Activated T-helper 1 cell treated with anti-CD3 and anti-CD28 coated beads, Interleukin-12 subunit alpha, Interleukin-12 subunit beta, Interleukin-2, Interleukin-4 antibody, amounts not matched to agents 30 ng/mL and 10 ng/mL and 1 ng/mL, durations not matched to agents 14 hours and 24 hours and 36 hours (primary cell): ENCODE measurements at regions of chr6 and their contacts with region 1.

Region 1: GRCh38 chr6:154928325-154928922 is 66.7 kb upstream of the TIAM2 start:
- DNase-seq: peak; percentile 52
- H3K4me3 Mint-ChIP-seq: no peak overlapping the region
- H3K27ac Mint-ChIP-seq: peak overlapping the region; percentile 12
- H3K4me1 Mint-ChIP-seq: peaks cover 21% of the 10 kb centered on the region
- H3K27me3 Mint-ChIP-seq: no peaks in the 10 kb centered on the region

Region 2: GRCh38 chr6:154675602-154676088 is 252.8 kb before region 1 on chr6:
- intact Hi-C with region 1: loop called (anchors 1 kb)
- DNase-seq: peak; percentile 77
- H3K4me3 Mint-ChIP-seq: no peak overlapping the region
- H3K27ac Mint-ChIP-seq: no peak overlapping the region
- H3K4me1 Mint-ChIP-seq: no peaks in the 10 kb centered on the region
- H3K27me3 Mint-ChIP-seq: peaks cover 4% of the 10 kb centered on the region

Region 3: DNA sequence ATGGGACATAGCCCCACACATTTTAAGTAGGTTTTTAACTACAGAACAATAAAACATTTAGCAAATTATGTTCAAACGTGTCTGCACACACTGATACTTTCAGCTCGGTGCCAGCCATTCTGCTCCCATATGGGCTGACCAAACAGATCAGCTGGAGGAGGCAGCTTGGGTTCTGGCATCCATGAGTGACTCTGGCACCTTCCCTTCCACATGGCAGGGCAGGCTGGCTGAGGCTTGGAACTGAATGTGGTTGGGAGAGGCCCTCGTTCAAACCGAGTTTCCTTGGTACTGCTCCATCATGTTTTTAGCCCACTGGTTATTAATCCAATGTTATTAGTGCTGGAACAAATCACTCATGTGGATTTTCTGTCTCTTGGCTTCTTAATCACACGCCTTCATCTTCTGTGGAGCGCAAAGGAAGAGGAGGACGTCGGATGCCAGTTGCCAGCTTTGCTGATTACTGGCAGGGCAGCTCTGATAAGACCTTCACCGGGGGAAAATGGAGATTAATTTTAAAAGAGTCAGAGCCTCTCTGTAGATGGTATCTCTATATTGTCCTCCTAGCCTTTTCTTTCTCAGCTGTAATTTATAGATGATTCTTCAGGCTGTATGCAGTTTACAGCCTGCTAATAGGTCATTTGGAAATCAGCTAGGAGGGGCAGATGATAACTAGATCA is 26.4 kb before region 1 on chr6:
- intact Hi-C with region 1: no loop called
- DNase-seq: no peak
- H3K4me3 Mint-ChIP-seq: no peak overlapping the region
- H3K27ac Mint-ChIP-seq: no peak overlapping the region
- H3K4me1 Mint-ChIP-seq: no peaks in the 10 kb centered on the region
- H3K27me3 Mint-ChIP-seq: no peaks in the 10 kb centered on the region

Region 4: DNA sequence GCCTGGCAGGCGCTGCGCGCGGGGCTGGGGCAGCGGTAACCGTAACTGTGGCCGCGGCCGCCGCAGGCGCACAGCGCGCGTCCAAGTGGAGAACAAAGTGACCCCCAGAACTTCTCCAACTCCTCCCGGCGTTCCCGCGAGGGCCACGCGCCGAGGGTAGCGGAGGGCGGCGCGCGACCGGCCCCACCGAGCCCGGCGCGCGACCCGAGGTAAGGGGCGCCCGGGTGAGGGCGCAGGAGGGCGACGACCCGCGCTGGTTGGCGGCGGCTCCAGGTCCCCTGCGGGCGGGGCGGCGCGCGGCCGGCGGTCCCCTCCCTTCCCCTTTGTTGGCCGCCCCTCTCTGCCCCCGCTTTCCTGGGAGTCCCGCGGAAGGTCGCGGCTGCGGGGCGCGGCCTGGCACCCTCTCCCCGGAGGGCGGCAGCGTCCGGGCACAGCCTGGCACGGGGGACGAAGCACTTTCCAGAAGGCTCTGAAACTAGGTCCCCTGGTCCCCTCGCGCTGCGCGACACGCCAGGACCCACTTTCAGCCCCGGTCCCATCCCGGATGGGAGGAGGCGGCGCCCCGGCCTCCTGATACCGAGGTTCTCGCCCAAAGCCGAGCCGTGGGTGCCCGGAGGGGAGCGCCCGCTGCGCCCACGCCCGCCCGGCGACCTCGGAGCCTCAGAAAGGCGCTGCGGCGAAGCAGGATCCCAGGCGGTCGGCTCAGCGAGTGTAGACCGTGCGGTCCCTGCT is 67.0 kb after region 1 on chr6 and contains the start of gene TIAM2:
- intact Hi-C with region 1: loop called (anchors 1 kb)
- DNase-seq: peak; percentile 11
- H3K4me3 Mint-ChIP-seq: peak within 1 kb of the TSS; percentile 71
- H3K27ac Mint-ChIP-seq: peak within 1 kb of the TSS; percentile 44
- H3K4me1 Mint-ChIP-seq: peaks cover 18% of the 10 kb centered on the region
- H3K27me3 Mint-ChIP-seq: peaks cover 16% of the 10 kb centered on the region
- total RNA-seq, gene TIAM2: 90.4 and 95.6 TPM in 2 replicates

Region 5: GRCh38 chr6:155126727-155127439 is 198.5 kb after region 1 on chr6:
- intact Hi-C with region 1: loop called (anchors 2 kb)
- DNase-seq: no peak
- H3K4me3 Mint-ChIP-seq: peak overlapping the region; percentile 60
- H3K27ac Mint-ChIP-seq: peak overlapping the region; percentile 92
- H3K4me1 Mint-ChIP-seq: peaks cover 51% of the 10 kb centered on the region
- H3K27me3 Mint-ChIP-seq: no peaks in the 10 kb centered on the region

Region 6: DNA sequence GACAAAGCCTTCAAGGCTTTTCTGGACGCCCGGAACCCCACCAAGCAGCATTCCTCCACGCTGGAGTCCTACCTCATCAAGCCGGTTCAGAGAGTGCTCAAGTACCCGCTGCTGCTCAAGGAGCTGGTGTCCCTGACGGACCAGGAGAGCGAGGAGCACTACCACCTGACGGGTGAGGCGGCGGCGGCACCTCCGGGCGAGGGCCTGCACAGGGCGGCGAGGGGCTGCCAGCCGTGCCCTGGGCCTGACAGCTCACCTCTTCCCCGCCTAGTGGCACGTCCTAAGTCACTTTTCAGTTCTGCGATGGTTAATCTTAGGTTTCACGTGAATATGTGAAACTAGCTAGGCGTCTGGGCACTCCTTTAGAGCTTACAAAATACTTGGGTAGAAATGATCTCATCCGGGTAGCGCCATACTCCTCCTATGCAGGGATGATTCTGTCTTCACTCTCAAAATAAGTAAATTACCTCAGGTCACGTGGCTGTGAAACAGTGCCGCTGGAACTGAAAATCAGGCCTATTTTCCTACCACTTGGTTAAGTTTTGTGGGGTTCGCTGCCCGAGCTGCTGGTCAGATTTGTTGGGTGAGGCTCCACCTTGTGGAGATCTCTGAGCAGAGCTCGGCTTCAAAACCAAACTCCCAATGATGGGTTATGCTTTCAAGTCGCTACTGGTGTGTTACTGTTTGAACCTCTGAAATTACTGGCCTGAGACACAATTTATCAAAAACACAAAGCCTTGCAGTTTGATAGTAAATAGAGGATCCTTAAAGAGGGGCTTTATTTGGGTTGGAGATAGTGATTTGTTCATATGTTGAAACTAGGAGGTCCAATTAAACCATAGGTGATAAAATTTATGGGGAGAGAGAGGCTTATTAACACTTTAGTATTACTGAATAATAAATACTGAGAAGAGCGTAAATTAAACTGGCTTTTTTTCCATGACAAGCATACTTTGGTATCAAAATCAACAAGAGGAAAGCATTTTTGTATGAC is 319.9 kb after region 1 on chr6:
- intact Hi-C with region 1: loop called (anchors 1 kb)
- DNase-seq: no peak
- H3K4me3 Mint-ChIP-seq: no peak overlapping the region
- H3K27ac Mint-ChIP-seq: no peak overlapping the region
- H3K4me1 Mint-ChIP-seq: peaks cover 6% of the 10 kb centered on the region
- H3K27me3 Mint-ChIP-seq: no peaks in the 10 kb centered on the region